Naive thymus-derived CD4-positive, alpha-beta T cell (primary cell): ENCODE measurements at regions of chr11 and their contacts with region 1.

Region 1: DNA sequence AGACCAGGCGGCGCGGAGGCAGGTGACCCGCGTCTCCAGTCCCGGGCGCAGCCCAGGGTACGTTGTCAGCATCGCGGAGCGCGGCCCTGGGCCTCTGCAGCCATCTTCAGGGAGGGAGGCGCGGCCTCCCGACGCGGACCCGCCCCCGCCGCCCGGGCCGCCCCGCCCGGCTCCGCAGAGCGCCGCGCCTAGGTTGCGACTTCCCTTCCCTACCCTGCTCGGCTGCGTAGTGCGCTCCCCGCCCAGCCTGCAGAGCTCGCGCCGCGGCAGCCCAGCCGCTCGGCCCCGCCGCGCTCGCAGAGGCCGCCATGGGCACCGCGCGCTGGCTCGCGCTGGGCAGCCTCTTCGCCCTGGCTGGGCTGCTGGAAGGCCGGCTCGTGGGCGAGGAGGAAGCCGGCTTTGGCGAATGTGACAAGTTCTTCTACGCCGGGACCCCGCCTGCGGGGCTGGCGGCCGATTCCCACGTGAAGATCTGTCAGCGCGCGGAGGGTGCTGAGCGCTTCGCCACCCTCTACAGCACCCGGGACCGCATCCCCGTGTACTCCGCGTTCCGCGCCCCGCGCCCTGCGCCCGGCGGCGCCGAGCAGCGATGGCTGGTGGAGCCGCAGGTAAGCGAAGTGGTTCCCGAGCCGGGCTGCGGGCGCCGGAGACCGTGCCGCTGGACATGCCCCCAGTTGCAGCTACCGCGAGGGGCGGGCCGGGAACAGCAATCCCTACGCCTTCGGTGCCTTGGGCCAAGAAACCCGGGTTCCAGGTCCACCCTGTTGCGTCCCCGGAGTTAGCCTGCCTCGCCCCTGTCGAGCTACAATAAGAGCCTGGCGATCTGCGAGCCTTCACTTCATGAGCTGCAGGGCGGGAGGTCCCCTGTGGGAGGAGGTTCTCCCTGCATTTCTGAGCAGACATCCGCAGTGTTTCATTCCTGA is at the start of gene ENDOD1:
- DNase-seq: peak; percentile 81 to 89 (median 87)
- ATAC-seq: peak; percentile 98
- H3K4me3 ChIP-seq: peak within 1 kb of the TSS; percentile 79
- H3K4me3 Mint-ChIP-seq: peak within 1 kb of the TSS; percentile 86 to 95 (median 92)
- H3K27ac ChIP-seq: peak within 1 kb of the TSS; percentile 87
- H3K27ac Mint-ChIP-seq: peak within 1 kb of the TSS; percentile 96 to 99 (median 98)
- H3K4me1 ChIP-seq: peaks cover 16 to 31% of the 10 kb centered on the region in 2 donors
- H3K4me1 Mint-ChIP-seq: peaks cover 24 to 61% (median 49%) of the 10 kb centered on the region in 7 donors
- H3K27me3 ChIP-seq: no peaks in the 10 kb centered on the region
- H3K27me3 Mint-ChIP-seq: no peaks in the 10 kb centered on the region
- total RNA-seq, gene ENDOD1: 4.7 to 23.2 (median 8.6) TPM

Region 2: GRCh38 chr11:94543695-94544645 is 545.9 kb before region 1 on chr11 and contains the start of gene FUT4:
- CTCF ChIA-PET with region 1: no interaction called
- POLR2A ChIA-PET with region 1: no interaction called
- intact Hi-C with region 1: loop called in 1 of 2 experiments (anchors 1 kb)
- DNase-seq: peak; percentile 51 to 83 (median 70)
- ATAC-seq: peak; percentile 84
- H3K4me3 ChIP-seq: peak within 1 kb of the TSS; percentile 85
- H3K4me3 Mint-ChIP-seq: peak within 1 kb of the TSS; percentile 93 to 100 (median 98)
- H3K27ac ChIP-seq: peak within 1 kb of the TSS; percentile 88
- H3K27ac Mint-ChIP-seq: peak within 1 kb of the TSS; percentile 96 to 100 (median 99)
- H3K4me1 ChIP-seq: peaks cover 22 to 29% of the 10 kb centered on the region in 2 donors
- H3K4me1 Mint-ChIP-seq: peaks cover 24 to 49% (median 41%) of the 10 kb centered on the region in 7 donors
- H3K27me3 ChIP-seq: no peaks in the 10 kb centered on the region
- H3K27me3 Mint-ChIP-seq: no peaks in the 10 kb centered on the region
- total RNA-seq, gene FUT4: 5.6 to 10.2 (median 6.9) TPM

Region 3: DNA sequence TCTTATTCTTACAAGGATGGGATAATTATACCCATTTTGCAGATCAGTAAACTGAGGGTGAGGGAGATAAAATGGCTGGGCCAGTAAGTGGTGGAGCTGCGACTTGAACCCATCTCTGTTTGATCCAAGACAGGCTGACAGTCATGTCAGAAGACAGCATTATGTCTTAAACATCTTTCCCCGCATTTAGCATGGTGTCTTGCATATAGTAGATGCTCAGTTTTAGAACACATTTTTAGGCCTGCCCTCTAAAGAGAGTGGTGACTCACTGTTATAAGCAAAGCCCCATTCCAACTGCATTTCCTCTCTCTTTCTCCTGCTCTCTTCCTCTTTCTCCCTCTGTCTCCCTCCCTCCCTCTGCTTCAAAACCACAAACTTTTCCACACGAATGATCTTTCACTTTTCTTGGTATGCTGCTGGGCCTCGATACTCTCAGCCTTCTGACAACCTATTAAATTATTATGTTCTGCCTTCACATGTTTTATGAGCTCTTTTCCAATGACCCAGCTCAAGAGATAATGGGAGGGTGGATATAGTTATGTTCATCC is 141.7 kb before region 1 on chr11:
- CTCF ChIA-PET with region 1: no interaction called
- POLR2A ChIA-PET with region 1: no interaction called
- intact Hi-C with region 1: no loop called
- DNase-seq: no peak
- ATAC-seq: no peak
- H3K4me3 ChIP-seq: no peak overlapping the region
- H3K4me3 Mint-ChIP-seq: no peak overlapping the region
- H3K27ac ChIP-seq: no peak overlapping the region
- H3K27ac Mint-ChIP-seq: no peak overlapping the region
- H3K4me1 ChIP-seq: no peaks in the 10 kb centered on the region
- H3K4me1 Mint-ChIP-seq: peaks cover 0 to 10% (median 5%) of the 10 kb centered on the region in 7 donors
- H3K27me3 ChIP-seq: no peaks in the 10 kb centered on the region
- H3K27me3 Mint-ChIP-seq: peaks cover 0 to 7% (median 4%) of the 10 kb centered on the region in 5 donors

Region 4: GRCh38 chr11:95024958-95025357 is 64.9 kb before region 1 on chr11 and contains the start of gene KDM4E:
- CTCF ChIA-PET with region 1: no interaction called
- POLR2A ChIA-PET with region 1: no interaction called
- intact Hi-C with region 1: no loop called
- DNase-seq: no peak
- ATAC-seq: no peak
- H3K4me3 ChIP-seq: no peak within 1 kb of the TSS
- H3K4me3 Mint-ChIP-seq: no peak within 1 kb of the TSS
- H3K27ac ChIP-seq: no peak within 1 kb of the TSS
- H3K27ac Mint-ChIP-seq: no peak within 1 kb of the TSS
- H3K4me1 ChIP-seq: no peaks in the 10 kb centered on the region
- H3K4me1 Mint-ChIP-seq: no peaks in the 10 kb centered on the region
- H3K27me3 ChIP-seq: no peaks in the 10 kb centered on the region
- H3K27me3 Mint-ChIP-seq: no peaks in the 10 kb centered on the region
- total RNA-seq, gene KDM4E: not detected

Region 5: GRCh38 chr11:95100856-95101507 is 11.1 kb after region 1 on chr11:
- CTCF ChIA-PET with region 1: interaction called, 4 read pairs
- POLR2A ChIA-PET with region 1: interaction called, 7 read pairs
- intact Hi-C with region 1: loop called in 1 of 2 experiments (anchors 1 kb)
- DNase-seq: no peak
- ATAC-seq: no peak
- H3K4me3 ChIP-seq: no peak overlapping the region
- H3K4me3 Mint-ChIP-seq: no peak overlapping the region
- H3K27ac ChIP-seq: no peak overlapping the region
- H3K27ac Mint-ChIP-seq: no peak overlapping the region
- H3K4me1 ChIP-seq: peaks cover 0 to 6% of the 10 kb centered on the region in 2 donors
- H3K4me1 Mint-ChIP-seq: peaks cover 8 to 24% (median 19%) of the 10 kb centered on the region in 7 donors
- H3K27me3 ChIP-seq: no peaks in the 10 kb centered on the region
- H3K27me3 Mint-ChIP-seq: no peaks in the 10 kb centered on the region

Region 6: GRCh38 chr11:95138448-95138847 is 48.6 kb after region 1 on chr11:
- CTCF ChIA-PET with region 1: interaction called, 3 read pairs
- POLR2A ChIA-PET with region 1: interaction called, 4 read pairs
- intact Hi-C with region 1: loop called in 1 of 2 experiments (anchors 2 kb)
- DNase-seq: no peak
- ATAC-seq: peak; percentile 57
- H3K4me3 ChIP-seq: no peak overlapping the region
- H3K4me3 Mint-ChIP-seq: no peak overlapping the region
- H3K27ac ChIP-seq: no peak overlapping the region
- H3K27ac Mint-ChIP-seq: no peak overlapping the region
- H3K4me1 ChIP-seq: no peaks in the 10 kb centered on the region
- H3K4me1 Mint-ChIP-seq: peaks cover 0 to 9% (median 0%) of the 10 kb centered on the region in 7 donors
- H3K27me3 ChIP-seq: no peaks in the 10 kb centered on the region
- H3K27me3 Mint-ChIP-seq: peaks cover 0 to 10% (median 6%) of the 10 kb centered on the region in 5 donors